ENCODE measurements at regions of chr12 and their contacts with region 1.

Region 1: GRCh38 chr12:57904848-57905811 is 36.2 kb upstream of the ATP23 start:
- DNase-seq: peak; percentile 86
- ATAC-seq: peak; percentile 93

Region 2: GRCh38 chr12:57782608-57783465 is 122.3 kb before region 1 on chr12 and contains the start of gene TSFM:
- intact Hi-C with region 1: loop called (anchors 1 kb)
- DNase-seq: peak; percentile 99
- ATAC-seq: peak; percentile 92
- total RNA-seq, gene TSFM: 48.2 TPM

Region 3: DNA sequence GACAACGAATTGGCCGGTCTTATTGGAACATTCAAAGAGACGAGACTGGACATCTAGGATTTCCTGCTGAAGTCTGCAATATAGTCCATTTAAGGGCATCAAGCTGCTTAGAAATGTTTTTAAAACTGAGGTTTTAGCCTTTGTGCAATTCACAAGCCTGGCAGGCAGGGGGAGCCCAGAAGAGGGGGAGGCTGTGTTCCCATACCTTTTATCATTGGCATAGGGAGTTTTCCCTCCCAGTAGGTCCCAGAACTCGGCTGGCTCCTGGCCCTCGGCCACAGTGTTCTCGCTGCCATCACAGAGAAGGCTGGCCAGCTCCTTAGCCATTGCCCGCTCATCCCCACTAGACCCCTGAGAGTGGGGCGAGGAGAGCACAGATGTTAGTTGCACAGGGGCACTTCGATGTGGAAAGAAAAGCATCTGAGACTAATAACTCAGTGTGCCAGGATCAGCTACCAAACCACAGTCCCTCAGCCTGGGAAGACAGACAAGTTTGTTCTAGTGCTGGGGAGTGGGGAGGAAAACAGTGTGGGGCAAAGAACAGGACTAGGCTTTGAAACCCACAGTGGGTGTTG is 101.7 kb before region 1 on chr12:
- intact Hi-C with region 1: loop called (anchors 1 kb)
- DNase-seq: no peak
- ATAC-seq: peak; percentile 75

Region 4: GRCh38 chr12:57836442-57837375 is 68.4 kb before region 1 on chr12:
- intact Hi-C with region 1: loop called (anchors 1 kb)
- DNase-seq: peak; percentile 78
- ATAC-seq: peak; percentile 58

Region 5: DNA sequence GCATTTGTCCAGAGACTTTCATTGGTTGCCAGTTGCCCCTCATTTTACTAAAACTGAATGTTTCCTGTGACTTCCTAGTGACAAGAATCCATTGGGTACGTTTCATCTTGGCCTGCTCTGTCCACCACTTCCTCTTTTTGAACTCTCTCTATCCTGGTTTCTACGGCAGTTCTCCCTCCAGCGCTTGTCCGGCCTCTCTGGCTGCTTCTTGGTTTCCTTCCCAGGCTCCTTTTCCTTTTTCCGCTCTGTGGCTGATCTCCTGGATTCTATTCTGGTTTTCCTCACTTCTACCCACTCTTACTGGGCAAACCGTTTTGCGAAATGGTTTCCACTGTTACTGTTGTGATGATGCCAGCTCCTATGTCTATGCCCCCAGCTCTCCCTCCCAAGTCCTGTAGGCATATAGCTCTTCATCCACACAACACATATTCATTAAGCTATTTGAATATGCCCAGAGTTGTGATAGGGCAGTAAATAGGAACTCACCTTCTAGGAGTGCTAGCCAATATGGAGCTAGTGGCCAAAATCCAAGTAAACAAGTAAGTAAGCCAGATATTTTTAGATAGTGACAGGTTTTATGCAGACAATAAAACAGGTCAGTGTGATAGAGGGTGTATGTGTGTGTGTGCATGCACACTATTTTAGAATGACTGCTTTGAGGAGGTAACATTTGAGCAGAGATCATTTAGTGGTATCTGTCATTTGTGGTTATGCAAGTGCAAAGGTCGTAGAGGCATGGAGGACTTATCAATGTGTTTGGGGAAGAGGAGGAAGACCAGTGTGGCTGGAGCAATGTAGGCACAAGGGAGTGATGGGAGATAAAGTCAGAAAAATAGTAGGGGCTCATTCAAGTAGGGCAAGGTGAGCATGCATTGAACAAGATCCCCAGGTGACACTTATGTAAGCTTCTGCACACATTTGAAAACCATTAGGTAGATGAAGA is 30.7 kb before region 1 on chr12:
- intact Hi-C with region 1: no loop called
- DNase-seq: no peak
- ATAC-seq: peak; percentile 38

Measured in Right ventricle myocardium inferior (tissue), 1 donor.